BJ (cell line): ENCODE measurements at regions of chr9 and their contacts with region 1.

Region 1: GRCh38 chr9:124209279-124209678 is 48.5 kb upstream of the NEK6 start:
- DNase-seq: no peak
- H3K4me3 ChIP-seq: no peak overlapping the region
- H3K27me3 ChIP-seq: peaks cover 2% of the 10 kb centered on the region
- CTCF ChIP-seq: no peak

Region 2: DNA sequence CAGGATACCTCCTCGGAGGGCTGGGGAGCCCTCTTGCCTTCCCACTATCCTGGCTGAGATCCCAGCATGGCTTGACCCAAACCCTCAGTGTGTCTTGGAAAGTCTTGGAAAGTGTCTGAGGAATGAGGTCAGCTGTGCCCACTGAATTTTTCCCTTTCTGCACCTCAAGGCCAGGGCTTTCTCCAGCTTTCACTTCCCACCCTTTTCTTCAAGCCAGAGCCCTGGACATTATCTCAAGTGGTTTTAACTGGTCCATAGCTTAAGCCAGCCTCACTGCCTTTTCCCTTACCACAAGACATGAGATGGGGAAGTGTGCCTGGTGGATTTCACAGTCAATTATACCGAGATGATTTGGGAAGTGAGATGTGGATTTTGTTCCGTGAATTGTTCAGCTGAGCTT is 233.4 kb before region 1 on chr9:
- CTCF ChIA-PET with region 1: no interaction called
- POLR2A ChIA-PET with region 1: no interaction called
- DNase-seq: no peak
- H3K4me3 ChIP-seq: no peak overlapping the region
- H3K27me3 ChIP-seq: peaks cover 9% of the 10 kb centered on the region
- CTCF ChIP-seq: no peak

Region 3: GRCh38 chr9:124180557-124180956 is 28.7 kb before region 1 on chr9:
- CTCF ChIA-PET with region 1: interaction called, 3 read pairs
- POLR2A ChIA-PET with region 1: interaction called, 10 read pairs
- DNase-seq: no peak
- H3K4me3 ChIP-seq: no peak overlapping the region
- H3K27me3 ChIP-seq: peaks cover 14% of the 10 kb centered on the region
- CTCF ChIP-seq: no peak

Region 4: GRCh38 chr9:124190761-124191160 is 18.5 kb before region 1 on chr9:
- CTCF ChIA-PET with region 1: no interaction called
- POLR2A ChIA-PET with region 1: no interaction called
- DNase-seq: no peak
- H3K4me3 ChIP-seq: no peak overlapping the region
- H3K27me3 ChIP-seq: peaks cover 6% of the 10 kb centered on the region; the same call in 1 of the 2 replicates
- CTCF ChIP-seq: no peak

Region 5: DNA sequence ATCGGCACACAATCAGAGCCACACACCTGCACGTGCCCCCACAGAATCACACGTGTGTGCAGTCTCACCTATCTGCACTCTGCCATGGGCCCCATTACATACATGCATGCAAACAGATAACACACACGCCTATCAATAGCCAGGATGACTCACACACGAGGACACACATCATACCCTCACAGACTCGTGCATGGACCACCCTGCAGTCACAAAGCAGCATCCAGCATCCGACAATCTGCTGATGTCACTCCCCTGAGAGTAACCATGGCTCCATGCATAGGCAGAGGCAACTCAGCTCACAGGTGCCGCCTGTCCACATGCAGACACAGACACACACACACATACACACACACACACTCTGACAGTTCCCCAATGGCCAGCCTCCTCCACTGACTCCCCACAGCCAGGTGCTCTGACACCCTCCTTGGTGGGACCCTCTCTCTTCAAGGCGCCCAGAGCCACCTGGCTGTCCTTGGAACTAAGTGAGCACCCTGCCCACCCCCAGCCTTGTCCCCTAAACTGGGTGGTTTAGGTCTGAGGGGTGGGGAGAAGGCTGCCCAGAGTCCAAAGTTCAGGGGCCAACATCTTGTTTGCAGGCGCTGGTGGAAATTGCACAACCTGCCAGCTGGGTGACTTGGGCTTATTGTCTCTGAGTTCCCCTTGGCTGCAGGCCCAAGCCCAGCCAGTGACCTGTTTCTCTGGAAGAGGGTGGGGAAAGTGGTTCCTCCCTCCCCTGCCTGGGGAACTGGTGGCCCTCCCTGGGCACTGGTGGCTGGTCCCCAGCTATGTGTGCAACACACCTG is 13.8 kb after region 1 on chr9:
- CTCF ChIA-PET with region 1: no interaction called
- POLR2A ChIA-PET with region 1: no interaction called
- DNase-seq: no peak
- H3K4me3 ChIP-seq: no peak overlapping the region
- H3K27me3 ChIP-seq: no peaks in the 10 kb centered on the region
- CTCF ChIP-seq: no peak